T-cell (primary cell): ENCODE measurements at regions of chr12 and their contacts with region 1.

Region 1: DNA sequence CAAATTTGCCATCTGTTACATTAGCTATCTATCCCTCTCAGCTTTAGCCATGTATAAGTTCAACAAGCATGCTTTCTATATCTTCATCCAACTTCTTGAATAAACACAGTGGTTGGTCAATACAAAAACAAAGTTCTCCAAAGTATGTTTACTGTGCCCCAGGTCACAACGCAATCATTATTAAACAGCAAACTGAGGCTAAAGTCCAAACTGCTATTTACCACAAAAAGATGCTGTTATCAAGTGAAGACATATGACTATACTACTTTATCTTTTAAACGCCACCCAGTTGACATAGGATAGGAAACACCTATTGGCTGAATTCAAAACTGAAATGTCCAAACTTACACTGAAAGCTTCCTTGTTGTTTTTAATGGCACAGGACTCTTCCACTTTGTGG is 11.7 kb downstream of the ZCCHC8 start:
- DNase-seq: no peak
- ATAC-seq: no peak
- H3K4me3 ChIP-seq: no peak overlapping the region
- H3K4me3 Mint-ChIP-seq: no peak overlapping the region
- H3K27ac ChIP-seq: no peak overlapping the region
- H3K27ac Mint-ChIP-seq: no peak overlapping the region
- H3K4me1 ChIP-seq: no peaks in the 10 kb centered on the region
- H3K4me1 Mint-ChIP-seq: peaks cover 8 to 13% (median 8%) of the 10 kb centered on the region in 3 donors
- H3K27me3 ChIP-seq: no peaks in the 10 kb centered on the region
- H3K27me3 Mint-ChIP-seq: no peaks in the 10 kb centered on the region

Region 2: DNA sequence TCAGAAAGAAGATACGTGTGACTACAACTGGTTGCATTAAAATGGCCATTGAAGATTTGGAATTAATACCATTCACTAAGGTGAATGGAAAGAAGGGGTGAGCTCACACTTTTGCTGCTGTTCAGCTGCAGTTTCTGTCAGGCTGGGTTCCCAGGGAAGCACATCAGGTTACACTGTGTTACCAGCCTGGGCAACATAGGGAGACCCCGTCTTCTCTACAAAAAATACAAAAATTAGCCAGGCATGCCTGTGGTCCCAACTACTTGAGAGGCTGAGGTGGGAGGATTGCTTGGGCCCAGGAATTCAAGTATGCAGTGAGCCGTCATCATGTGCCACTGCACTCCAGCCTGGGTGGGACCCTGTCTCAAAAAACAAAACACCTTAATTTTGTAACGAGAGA is 24.6 kb after region 1 on chr12:
- CTCF ChIA-PET with region 1: no interaction called
- POLR2A ChIA-PET with region 1: interaction called, 4 to 21 read pairs
- DNase-seq: no peak
- ATAC-seq: peak in 1 of 4 experiments; percentile 17
- H3K4me3 ChIP-seq: no peak overlapping the region
- H3K4me3 Mint-ChIP-seq: no peak overlapping the region
- H3K27ac ChIP-seq: no peak overlapping the region
- H3K27ac Mint-ChIP-seq: no peak overlapping the region
- H3K4me1 ChIP-seq: peaks cover 0 to 4% of the 10 kb centered on the region in 2 experiments
- H3K4me1 Mint-ChIP-seq: peaks cover 9 to 20% (median 15%) of the 10 kb centered on the region in 3 donors
- H3K27me3 ChIP-seq: no peaks in the 10 kb centered on the region
- H3K27me3 Mint-ChIP-seq: no peaks in the 10 kb centered on the region